Activated naive CD4-positive, alpha-beta T cell treated with anti-CD3 and anti-CD28 coated beads for 36 hours (primary cell): ENCODE measurements at regions of chr2 and their contacts with region 1.

Region 1: GRCh38 chr2:53786705-53787612 is at the starts of genes ASB3 and ERLEC1:
- DNase-seq: peak; percentile 90
- H3K4me3 Mint-ChIP-seq: peak within 1 kb of the TSS; percentile 95
- H3K27ac Mint-ChIP-seq: peak within 1 kb of the TSS; percentile 89
- H3K4me1 Mint-ChIP-seq: peaks cover 50% of the 10 kb centered on the region
- H3K27me3 Mint-ChIP-seq: no peaks in the 10 kb centered on the region
- total RNA-seq, gene ASB3: 17.2 to 19.1 TPM
- total RNA-seq, gene ERLEC1: 16.7 to 18.5 TPM

Region 2: DNA sequence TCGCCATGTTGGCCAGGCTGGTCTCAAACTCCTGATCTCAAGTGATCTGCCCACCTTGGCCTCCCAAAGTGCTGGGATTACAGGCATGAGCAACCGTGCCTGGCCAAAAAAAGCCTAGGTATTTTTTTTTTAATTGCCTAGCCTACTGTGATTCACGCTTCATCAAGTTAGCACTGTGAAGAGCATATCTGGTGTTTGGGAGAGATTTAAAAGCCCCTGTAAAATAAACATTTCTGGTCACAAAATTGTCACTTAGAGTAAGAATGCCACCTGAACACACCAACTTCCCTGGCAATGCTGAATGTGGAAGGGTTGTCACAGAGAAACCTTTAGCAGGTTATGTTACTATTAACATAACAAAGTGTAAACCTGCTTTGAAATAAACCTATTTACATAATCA is 59.0 kb before region 1 on chr2:
- CTCF ChIA-PET with region 1: no interaction called
- intact Hi-C with region 1: no loop called
- DNase-seq: no peak
- H3K4me3 Mint-ChIP-seq: no peak overlapping the region
- H3K27ac Mint-ChIP-seq: no peak overlapping the region
- H3K4me1 Mint-ChIP-seq: peaks cover 3% of the 10 kb centered on the region
- H3K27me3 Mint-ChIP-seq: no peaks in the 10 kb centered on the region

Region 3: GRCh38 chr2:53767405-53768241 is 19.3 kb before region 1 on chr2 and contains the start of gene CHAC2:
- CTCF ChIA-PET with region 1: interaction called, 6 read pairs
- intact Hi-C with region 1: loop called (anchors 1 kb)
- DNase-seq: peak; percentile 91
- H3K4me3 Mint-ChIP-seq: peak within 1 kb of the TSS; percentile 94
- H3K27ac Mint-ChIP-seq: peak within 1 kb of the TSS; percentile 93
- H3K4me1 Mint-ChIP-seq: peaks cover 26% of the 10 kb centered on the region
- H3K27me3 Mint-ChIP-seq: no peaks in the 10 kb centered on the region
- total RNA-seq, gene CHAC2: 11.5 to 12.4 TPM

Region 4: GRCh38 chr2:54041135-54041534 is 254.2 kb after region 1 on chr2:
- CTCF ChIA-PET with region 1: no interaction called
- intact Hi-C with region 1: loop called (anchors 5 kb)
- DNase-seq: peak; percentile 73
- H3K4me3 Mint-ChIP-seq: no peak overlapping the region
- H3K27ac Mint-ChIP-seq: no peak overlapping the region
- H3K4me1 Mint-ChIP-seq: no peaks in the 10 kb centered on the region
- H3K27me3 Mint-ChIP-seq: no peaks in the 10 kb centered on the region

Region 5: DNA sequence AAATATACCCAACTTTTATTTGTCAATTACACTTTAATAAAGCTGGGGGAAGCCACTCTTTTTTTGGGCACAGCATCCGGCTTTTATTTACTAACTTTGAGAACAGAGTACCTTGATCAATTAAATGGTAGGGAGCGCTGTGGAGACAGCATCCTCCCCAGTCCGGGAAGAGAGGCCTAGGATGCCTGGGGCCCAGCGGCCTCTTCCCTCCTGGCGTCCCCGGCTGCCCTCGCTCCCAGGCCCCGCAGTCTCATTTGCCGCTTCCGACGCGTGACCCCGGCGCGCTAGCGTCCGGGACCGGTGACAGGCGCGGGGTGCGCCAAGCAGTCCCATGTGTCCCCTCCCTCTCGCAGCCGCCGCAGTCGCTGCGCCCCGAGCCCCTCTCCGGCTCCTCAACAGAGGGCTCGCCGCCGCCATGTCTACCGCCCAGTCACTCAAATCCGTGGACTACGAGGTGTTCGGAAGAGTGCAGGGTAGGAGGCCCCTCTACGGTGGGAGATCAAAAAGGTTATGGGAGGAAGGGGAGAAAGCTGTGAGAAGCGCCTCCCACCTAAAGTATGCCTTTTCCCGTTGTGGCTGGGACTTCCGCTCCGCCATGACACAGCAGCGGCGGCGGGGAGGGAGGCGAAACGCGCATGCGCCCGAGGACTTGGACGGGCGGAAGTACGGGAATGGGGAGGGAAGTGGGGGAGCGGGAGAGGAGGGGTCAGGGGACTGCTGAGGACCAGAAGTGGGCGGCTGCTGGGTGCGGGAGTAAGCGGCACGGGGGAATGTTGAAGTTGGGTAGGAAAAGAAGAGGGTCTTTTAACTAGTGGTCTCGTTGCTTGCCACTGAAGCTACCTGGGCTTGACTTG is 328.6 kb after region 1 on chr2 and contains the start of gene ACYP2:
- CTCF ChIA-PET with region 1: no interaction called
- intact Hi-C with region 1: loop called (anchors 2 kb)
- DNase-seq: peak; percentile 95
- H3K4me3 Mint-ChIP-seq: peak within 1 kb of the TSS; percentile 97
- H3K27ac Mint-ChIP-seq: peak within 1 kb of the TSS; percentile 100
- H3K4me1 Mint-ChIP-seq: peaks cover 11% of the 10 kb centered on the region
- H3K27me3 Mint-ChIP-seq: no peaks in the 10 kb centered on the region
- total RNA-seq, gene ACYP2: 6.8 to 7.3 TPM

Region 6: DNA sequence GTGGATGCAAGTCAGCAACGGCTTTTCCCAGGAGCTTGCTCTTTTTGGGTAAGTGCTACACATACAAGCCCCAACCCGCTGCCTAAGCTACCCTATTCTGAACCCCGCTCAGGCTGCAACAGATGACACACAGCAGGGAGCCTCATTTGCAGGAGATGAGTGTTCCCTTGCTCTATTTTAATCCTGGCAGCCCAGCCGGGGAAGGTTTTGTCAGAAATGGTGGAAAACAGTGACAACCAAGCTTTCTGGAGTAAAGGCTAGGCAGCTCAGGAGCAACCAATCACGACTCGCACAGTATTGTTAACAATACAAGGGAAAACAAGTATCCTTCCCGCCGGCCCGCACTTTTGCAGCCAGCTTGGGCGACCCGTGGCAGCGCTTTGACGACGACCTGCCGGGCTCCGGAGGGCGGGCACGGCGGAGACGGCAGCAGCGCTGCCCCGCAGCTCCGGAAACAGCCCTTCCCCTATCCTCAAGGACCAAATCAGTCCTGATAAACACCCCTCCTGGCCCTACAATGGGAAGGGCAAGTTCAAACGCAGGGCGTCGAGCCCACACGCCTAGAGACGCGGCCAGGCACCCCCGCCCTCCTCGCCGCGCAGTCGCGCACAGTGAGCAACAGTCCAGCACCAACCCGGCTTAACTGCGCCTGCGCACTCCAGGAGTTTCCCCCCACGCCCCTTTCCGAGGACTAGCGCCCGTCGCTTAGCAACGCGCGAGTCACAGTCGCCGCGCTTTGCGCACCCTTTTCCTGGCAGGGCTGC is 543.4 kb after region 1 on chr2:
- CTCF ChIA-PET with region 1: no interaction called
- intact Hi-C with region 1: loop called (anchors 10 kb)
- DNase-seq: peak; percentile 93
- H3K4me3 Mint-ChIP-seq: peak overlapping the region; percentile 83
- H3K27ac Mint-ChIP-seq: no peak overlapping the region
- H3K4me1 Mint-ChIP-seq: peaks cover 17% of the 10 kb centered on the region
- H3K27me3 Mint-ChIP-seq: peaks cover 6% of the 10 kb centered on the region